Right ventricle myocardium inferior (tissue), 1 donor: ENCODE measurements at regions of chr4 and their contacts with region 1.

Region 1: DNA sequence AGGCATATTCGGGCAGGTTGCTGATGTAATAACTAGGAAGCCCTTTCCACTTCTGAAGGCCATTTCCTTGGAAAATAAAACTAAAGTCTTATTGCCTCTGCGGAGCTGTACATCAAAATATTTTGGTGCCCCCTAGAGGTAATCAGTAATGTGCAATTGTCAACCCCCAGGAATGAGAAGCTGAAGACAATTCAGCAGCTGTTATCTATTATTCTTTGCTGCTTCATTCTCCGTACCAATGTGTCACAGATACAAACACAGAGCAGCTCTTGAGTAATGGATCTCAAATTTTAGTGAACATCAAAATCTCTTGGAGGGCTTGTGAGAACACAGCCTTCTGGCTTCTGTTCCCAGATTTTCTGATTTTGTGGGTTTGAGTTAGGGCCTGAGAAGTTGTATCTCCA is 3.5 kb upstream of the SLIT2 start:
- DNase-seq: no peak
- ATAC-seq: no peak

Region 2: GRCh38 chr4:18689308-18690115 is 1558.6 kb before region 1 on chr4:
- intact Hi-C with region 1: loop called (anchors 5 kb)
- DNase-seq: no peak
- ATAC-seq: peak; percentile 46

Region 3: DNA sequence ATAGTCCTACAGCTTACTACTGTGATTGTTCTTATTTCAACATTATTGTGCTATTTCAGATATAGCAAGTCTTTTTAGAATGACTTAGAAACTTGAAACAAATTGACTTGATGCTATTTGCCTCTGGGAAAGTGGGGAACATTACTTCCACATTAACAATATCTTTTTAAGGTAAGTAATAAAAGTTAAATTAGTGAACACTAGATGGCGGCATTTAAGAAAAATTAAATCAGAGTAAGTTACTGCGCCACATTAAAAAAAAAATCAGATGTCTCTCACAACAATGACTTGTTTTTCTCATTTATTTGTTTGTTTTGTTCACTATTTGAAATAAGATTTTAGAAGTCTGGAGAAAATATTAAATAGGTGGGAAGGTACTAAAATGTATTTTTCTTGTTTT is 1023.3 kb before region 1 on chr4:
- intact Hi-C with region 1: loop called (anchors 5 kb)
- DNase-seq: no peak
- ATAC-seq: no peak

Region 4: GRCh38 chr4:20356565-20356964 is 108.4 kb after region 1 on chr4:
- intact Hi-C with region 1: no loop called
- DNase-seq: no peak
- ATAC-seq: no peak